IMR-90 (cell line): ENCODE measurements at regions of chr6 and their contacts with region 1.

Region 1: DNA sequence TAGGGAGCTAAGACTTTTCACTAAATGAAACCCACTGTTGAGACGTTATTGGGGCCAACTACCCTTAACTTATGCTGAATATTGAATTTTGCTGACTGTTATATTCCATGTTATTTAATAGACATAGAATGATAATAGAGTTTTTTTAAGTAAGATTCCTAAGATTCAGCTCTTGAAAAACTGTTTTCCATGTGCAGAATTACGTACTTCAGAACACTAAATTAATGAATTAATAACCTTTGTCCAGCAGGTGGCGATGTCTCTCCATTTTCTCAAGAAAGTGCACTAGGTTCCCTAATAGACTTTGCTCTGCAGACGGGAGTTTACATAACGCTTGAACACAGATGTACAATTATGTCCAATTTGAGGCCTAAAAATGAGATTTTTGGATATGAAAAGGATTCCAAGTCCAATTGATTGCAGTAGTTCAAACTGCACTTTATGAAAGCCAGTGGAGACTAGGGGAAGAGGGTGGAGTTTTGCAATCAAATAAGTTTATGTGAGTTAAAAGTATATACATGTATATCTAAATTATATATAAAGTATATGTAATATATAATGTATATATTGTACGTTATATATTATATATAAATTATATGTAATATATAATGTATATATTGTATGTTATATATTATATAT is 282.1 kb downstream of the UST start:
- DNase-seq: peak; percentile 95
- ATAC-seq: no peak; the same call in 1 of the 2 replicates
- H3K4me3 ChIP-seq: no peak overlapping the region
- H3K27ac ChIP-seq: no peak overlapping the region
- H3K4me1 ChIP-seq: peaks cover 20% of the 10 kb centered on the region
- H3K27me3 ChIP-seq: no peaks in the 10 kb centered on the region
- CTCF ChIP-seq: peak; percentile 78
- POLR2A ChIP-seq: no peak
- RAD21 ChIP-seq: peak; percentile 90

Region 2: DNA sequence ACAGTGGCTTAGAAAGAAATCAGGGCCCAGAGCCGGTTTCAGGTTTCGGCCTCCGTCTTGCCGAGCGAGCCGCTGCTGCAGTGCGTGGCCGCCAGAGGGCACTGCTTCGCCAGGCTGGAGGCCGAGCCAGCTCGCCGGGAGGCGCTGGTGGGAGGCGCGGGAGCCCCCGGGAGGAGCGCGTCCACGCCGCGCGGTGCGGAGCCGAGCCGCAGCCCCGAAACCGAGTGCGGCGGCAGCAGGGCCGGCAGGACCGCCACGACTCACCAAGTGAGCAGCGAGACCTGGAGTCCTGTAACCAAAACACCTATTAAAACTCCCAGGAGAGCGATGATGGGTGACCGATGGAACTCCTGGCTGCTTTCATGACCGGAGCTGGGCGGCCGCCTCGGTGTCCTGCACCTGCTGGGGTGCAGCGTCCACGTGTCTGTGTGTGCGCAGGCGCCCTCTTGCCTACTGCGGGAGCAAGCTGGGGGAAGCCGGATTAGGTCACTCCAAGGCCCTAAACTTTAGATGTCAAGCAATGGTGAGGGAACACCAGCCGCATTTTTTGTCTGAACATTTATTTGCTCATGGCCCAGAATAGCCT is 468.9 kb before region 1 on chr6:
- CTCF ChIA-PET with region 1: interaction called, 4 read pairs
- POLR2A ChIA-PET with region 1: no interaction called
- dilution Hi-C with region 1: no loop called
- in situ Hi-C with region 1: no loop called
- intact Hi-C with region 1: loop called (anchors 5 kb)
- DNase-seq: peak; percentile 67
- ATAC-seq: peak; percentile 98
- H3K4me3 ChIP-seq: peak overlapping the region; percentile 60
- H3K27ac ChIP-seq: no peak overlapping the region; the same call in 1 of the 2 replicates
- H3K4me1 ChIP-seq: no peaks in the 10 kb centered on the region; the same call in 1 of the 2 replicates
- H3K27me3 ChIP-seq: no peaks in the 10 kb centered on the region
- CTCF ChIP-seq: peak; percentile 98
- POLR2A ChIP-seq: peak; percentile 48; the same call in 1 of the 2 replicates
- RAD21 ChIP-seq: peak; percentile 95

Region 3: GRCh38 chr6:148746363-148747144 is 282.3 kb before region 1 on chr6 and contains the start of gene UST:
- CTCF ChIA-PET with region 1: no interaction called
- POLR2A ChIA-PET with region 1: no interaction called
- dilution Hi-C with region 1: no loop called
- in situ Hi-C with region 1: no loop called
- intact Hi-C with region 1: loop called (anchors 1 kb)
- DNase-seq: peak; percentile 95
- ATAC-seq: peak; percentile 92
- H3K4me3 ChIP-seq: peak within 1 kb of the TSS; percentile 87
- H3K27ac ChIP-seq: peak within 1 kb of the TSS; percentile 90
- H3K4me1 ChIP-seq: peaks cover 4% of the 10 kb centered on the region
- H3K27me3 ChIP-seq: no peaks in the 10 kb centered on the region
- CTCF ChIP-seq: peak; percentile 58
- POLR2A ChIP-seq: peak; percentile 57; the same call in 1 of the 2 replicates
- RAD21 ChIP-seq: peak; percentile 69
- total RNA-seq, gene UST: 13.8 and 14.4 TPM in 2 replicates

Region 4: DNA sequence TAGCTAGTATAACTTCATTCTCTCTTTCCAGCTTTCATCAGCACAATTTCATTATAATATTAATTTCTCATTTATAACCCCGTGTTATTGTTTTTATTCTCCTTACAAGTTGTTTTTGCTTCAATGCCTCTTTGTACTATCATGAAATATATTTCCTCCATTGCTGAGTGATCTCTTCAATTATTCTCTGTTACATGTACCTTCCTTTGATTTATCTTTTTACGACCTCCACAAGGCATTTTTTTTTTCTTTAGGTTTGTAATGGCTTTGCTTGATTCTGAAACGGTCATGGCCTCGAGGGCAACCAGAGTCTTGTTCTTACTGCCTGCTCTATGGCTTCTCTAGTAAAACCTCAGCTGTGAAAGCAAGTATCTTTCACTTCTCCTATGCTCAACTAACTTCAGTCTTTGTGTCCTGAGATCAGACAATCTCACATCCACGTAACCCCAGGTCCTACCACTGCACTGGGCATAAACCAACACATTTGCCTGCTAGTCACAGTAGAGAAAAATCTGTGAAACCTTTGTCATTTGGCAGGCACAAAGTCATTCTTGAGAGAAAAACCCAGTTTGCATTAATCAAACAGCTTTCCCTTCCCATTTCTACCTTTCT is 162.1 kb before region 1 on chr6:
- CTCF ChIA-PET with region 1: no interaction called
- POLR2A ChIA-PET with region 1: no interaction called
- dilution Hi-C with region 1: no loop called
- in situ Hi-C with region 1: no loop called
- intact Hi-C with region 1: no loop called
- DNase-seq: no peak
- ATAC-seq: no peak
- H3K4me3 ChIP-seq: no peak overlapping the region
- H3K27ac ChIP-seq: no peak overlapping the region
- H3K4me1 ChIP-seq: peaks cover 14% of the 10 kb centered on the region
- H3K27me3 ChIP-seq: no peaks in the 10 kb centered on the region
- CTCF ChIP-seq: no peak
- POLR2A ChIP-seq: no peak
- RAD21 ChIP-seq: no peak

Region 5: GRCh38 chr6:148972481-148972880 is 56.4 kb before region 1 on chr6:
- CTCF ChIA-PET with region 1: interaction called, 3 read pairs
- POLR2A ChIA-PET with region 1: no interaction called
- dilution Hi-C with region 1: no loop called
- in situ Hi-C with region 1: no loop called
- intact Hi-C with region 1: loop called (anchors 2 kb)
- DNase-seq: no peak
- ATAC-seq: no peak
- H3K4me3 ChIP-seq: no peak overlapping the region
- H3K27ac ChIP-seq: no peak overlapping the region
- H3K4me1 ChIP-seq: peaks cover 28% of the 10 kb centered on the region
- H3K27me3 ChIP-seq: no peaks in the 10 kb centered on the region
- CTCF ChIP-seq: no peak
- POLR2A ChIP-seq: no peak
- RAD21 ChIP-seq: no peak

Region 6: DNA sequence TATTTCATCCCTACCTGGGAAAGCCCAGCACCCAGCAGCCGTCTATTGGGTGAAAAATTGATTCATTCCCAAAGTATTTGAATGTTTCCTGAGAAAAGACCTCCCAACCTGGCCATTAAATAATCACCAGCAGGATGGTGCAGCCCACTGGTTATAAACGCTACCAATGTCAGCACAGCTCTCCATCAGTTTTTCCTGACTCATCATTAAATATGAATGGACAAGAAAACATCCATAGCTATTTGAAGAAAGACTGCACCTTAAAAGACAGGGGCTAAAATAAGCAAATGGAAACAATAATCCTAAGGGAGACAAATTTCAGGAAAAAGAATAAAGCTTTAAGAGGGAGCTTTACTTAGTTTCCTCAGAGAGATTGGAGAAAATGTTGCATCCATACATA is 20.1 kb before region 1 on chr6:
- CTCF ChIA-PET with region 1: no interaction called
- POLR2A ChIA-PET with region 1: no interaction called
- dilution Hi-C with region 1: no loop called
- in situ Hi-C with region 1: no loop called
- intact Hi-C with region 1: no loop called
- DNase-seq: no peak
- ATAC-seq: no peak
- H3K4me3 ChIP-seq: no peak overlapping the region
- H3K27ac ChIP-seq: no peak overlapping the region
- H3K4me1 ChIP-seq: peaks cover 4% of the 10 kb centered on the region
- H3K27me3 ChIP-seq: no peaks in the 10 kb centered on the region
- CTCF ChIP-seq: no peak
- POLR2A ChIP-seq: no peak
- RAD21 ChIP-seq: no peak

Region 7: DNA sequence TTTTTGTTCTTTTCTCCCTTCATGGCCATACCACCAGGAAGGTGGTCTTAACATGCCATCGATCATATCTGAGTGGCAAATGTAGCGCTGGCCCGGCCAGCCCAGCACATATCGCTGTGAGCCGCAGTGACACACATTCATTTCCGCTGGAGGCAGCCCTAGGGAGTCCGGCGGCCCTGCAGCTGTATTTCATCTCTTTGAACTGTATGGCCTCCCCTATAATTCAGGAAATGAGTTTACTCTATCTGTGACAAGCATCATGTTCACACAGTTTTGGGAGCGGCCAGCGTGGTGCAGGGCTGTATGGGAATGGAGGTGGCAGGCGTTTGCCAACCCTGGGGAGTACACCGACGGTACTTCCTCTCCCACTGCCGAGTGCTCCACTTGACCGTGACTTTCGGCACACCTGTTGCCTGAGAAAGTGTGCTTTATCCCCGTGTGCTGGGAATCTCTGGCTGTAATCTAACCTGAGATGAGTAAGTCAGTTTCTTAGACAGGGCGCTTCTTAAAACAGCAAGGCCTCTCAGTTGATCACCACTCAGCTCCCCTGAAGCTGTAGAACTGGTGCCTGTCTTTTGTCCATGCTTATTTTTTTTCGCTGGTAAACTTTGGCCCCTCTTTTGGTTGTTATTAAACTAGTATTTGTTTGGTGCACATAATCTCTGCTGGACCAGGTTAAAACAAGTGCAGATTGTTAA is 31.6 kb after region 1 on chr6:
- CTCF ChIA-PET with region 1: no interaction called
- POLR2A ChIA-PET with region 1: no interaction called
- dilution Hi-C with region 1: no loop called
- in situ Hi-C with region 1: no loop called
- intact Hi-C with region 1: no loop called
- DNase-seq: peak; percentile 43
- ATAC-seq: peak; percentile 12; the same call in 1 of the 2 replicates
- H3K4me3 ChIP-seq: no peak overlapping the region
- H3K27ac ChIP-seq: no peak overlapping the region
- H3K4me1 ChIP-seq: peaks cover 16% of the 10 kb centered on the region
- H3K27me3 ChIP-seq: no peaks in the 10 kb centered on the region
- CTCF ChIP-seq: no peak
- POLR2A ChIP-seq: no peak
- RAD21 ChIP-seq: no peak

Region 8: DNA sequence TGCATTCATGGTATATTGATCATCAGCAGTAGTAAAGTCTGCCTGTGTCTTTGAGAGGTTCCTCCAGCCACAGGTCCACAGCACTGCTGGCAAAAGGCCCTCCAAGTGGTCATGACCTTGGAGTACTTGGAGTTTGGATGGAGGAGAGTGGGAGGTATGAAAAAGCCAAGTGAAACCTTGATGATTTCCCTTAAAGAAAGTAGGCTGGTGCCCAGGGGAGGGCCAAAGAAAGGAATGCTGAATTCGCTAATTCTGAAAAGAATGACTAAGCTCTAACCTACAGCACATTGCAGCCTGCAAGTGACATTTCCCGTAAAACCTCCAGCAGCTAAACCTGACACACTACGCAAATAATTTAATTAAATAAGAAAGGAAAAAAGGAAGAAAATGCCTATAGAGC is 65.3 kb after region 1 on chr6:
- CTCF ChIA-PET with region 1: no interaction called
- POLR2A ChIA-PET with region 1: no interaction called
- dilution Hi-C with region 1: no loop called
- in situ Hi-C with region 1: no loop called
- intact Hi-C with region 1: no loop called
- DNase-seq: peak; percentile 4
- ATAC-seq: peak; percentile 18
- H3K4me3 ChIP-seq: no peak overlapping the region
- H3K27ac ChIP-seq: no peak overlapping the region
- H3K4me1 ChIP-seq: peaks cover 12% of the 10 kb centered on the region
- H3K27me3 ChIP-seq: peaks cover 12% of the 10 kb centered on the region
- CTCF ChIP-seq: no peak
- POLR2A ChIP-seq: no peak
- RAD21 ChIP-seq: no peak

Region 9: DNA sequence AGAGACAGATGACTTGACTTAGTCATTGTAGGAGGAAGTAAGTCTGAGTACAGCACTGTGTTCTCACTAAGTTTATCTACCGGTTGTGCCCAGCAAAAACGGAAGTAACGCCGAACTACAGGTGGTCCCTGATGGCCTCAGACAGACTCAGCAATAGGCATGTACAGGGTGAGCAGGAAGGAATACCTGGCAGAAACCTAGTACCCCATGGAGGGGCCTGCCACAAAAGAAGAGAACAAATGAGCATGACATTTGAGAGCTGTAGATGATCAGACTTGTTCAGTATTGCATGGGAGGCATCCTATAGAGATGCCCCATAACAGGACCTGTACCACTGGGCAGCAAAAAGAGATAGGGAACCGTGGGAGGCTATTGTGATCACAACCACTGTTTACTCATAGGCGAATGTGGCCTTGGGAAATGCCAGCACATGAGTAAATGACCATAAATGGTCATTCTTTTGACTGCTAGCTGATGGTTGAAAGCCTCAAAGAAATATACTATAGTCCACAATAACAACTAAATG is 182.2 kb after region 1 on chr6:
- CTCF ChIA-PET with region 1: no interaction called
- POLR2A ChIA-PET with region 1: no interaction called
- dilution Hi-C with region 1: no loop called
- in situ Hi-C with region 1: no loop called
- intact Hi-C with region 1: loop called (anchors 10 kb)
- DNase-seq: peak; percentile 43
- ATAC-seq: no peak
- H3K4me3 ChIP-seq: no peak overlapping the region
- H3K27ac ChIP-seq: no peak overlapping the region
- H3K4me1 ChIP-seq: peaks cover 23% of the 10 kb centered on the region
- H3K27me3 ChIP-seq: no peaks in the 10 kb centered on the region; the same call in 1 of the 2 replicates
- CTCF ChIP-seq: no peak
- POLR2A ChIP-seq: no peak
- RAD21 ChIP-seq: no peak

Region 10: DNA sequence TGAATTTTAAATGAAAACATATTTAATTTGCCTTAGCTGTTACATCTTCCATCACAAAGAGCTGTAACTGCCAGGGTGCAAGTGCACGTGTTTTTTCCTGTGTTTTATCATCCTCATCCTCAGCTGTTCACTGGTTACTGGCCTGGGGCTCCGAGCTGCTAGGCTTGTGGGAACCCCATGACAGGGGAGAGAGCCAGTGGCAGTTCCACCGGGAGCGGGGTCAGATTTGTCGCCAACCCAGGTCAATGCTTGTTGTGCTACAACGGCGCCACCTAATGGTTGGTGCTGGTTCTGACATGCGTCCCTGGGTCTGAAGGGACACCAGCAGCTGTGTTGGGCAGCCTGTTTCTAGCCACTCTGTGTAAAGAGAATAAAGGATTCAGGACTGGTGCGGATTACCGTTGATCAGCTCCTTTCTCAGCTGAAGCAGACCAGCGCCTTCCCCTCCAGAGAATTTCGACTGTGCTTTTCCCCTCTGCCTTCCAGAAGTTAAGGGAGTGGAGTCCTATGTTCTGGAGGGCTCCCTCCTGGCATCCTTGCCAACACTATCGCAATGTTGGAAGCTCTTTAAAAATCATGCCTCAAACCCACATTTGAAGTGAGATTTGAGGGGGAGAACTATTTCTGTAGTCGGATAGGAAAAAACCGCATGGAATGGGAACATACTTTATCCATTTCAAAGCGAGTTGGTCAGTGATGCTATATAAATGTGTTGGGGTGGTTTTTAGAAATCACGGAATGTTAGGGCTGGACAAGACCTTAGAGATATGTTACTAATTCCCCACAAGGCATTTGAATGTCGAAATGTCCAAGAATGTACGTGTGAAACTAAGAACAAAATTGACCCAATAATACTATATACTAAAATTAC is 403.3 kb after region 1 on chr6:
- CTCF ChIA-PET with region 1: interaction called, 10 read pairs
- POLR2A ChIA-PET with region 1: no interaction called
- dilution Hi-C with region 1: no loop called
- in situ Hi-C with region 1: loop called (anchors 5 kb)
- intact Hi-C with region 1: loop called (anchors 1 kb)
- DNase-seq: peak; percentile 74
- ATAC-seq: peak; percentile 98
- H3K4me3 ChIP-seq: no peak overlapping the region
- H3K27ac ChIP-seq: no peak overlapping the region
- H3K4me1 ChIP-seq: 0 out of 2 replicates have a peak, but pooled peaks cover 2% of the 10 kb centered on the region
- H3K27me3 ChIP-seq: peaks cover 2% of the 10 kb centered on the region
- CTCF ChIP-seq: peak; percentile 93
- POLR2A ChIP-seq: no peak
- RAD21 ChIP-seq: peak; percentile 99